Endothelial cell of umbilical vein (primary cell): ENCODE measurements at regions of chr16 and their contacts with region 1.

Region 1: GRCh38 chr16:47141773-47142485 is 1.8 kb downstream of the NETO2 start:
- DNase-seq: peak; percentile 90
- H3K4me3 ChIP-seq: peak overlapping the region; percentile 62 to 83 (median 69)
- H3K27ac ChIP-seq: no peak overlapping the region
- H3K4me1 ChIP-seq: peaks cover 12% of the 10 kb centered on the region
- H3K27me3 ChIP-seq: no peaks in the 10 kb centered on the region
- CTCF ChIP-seq: peak; percentile 94 to 96
- POLR2A ChIP-seq: no peak

Region 2: DNA sequence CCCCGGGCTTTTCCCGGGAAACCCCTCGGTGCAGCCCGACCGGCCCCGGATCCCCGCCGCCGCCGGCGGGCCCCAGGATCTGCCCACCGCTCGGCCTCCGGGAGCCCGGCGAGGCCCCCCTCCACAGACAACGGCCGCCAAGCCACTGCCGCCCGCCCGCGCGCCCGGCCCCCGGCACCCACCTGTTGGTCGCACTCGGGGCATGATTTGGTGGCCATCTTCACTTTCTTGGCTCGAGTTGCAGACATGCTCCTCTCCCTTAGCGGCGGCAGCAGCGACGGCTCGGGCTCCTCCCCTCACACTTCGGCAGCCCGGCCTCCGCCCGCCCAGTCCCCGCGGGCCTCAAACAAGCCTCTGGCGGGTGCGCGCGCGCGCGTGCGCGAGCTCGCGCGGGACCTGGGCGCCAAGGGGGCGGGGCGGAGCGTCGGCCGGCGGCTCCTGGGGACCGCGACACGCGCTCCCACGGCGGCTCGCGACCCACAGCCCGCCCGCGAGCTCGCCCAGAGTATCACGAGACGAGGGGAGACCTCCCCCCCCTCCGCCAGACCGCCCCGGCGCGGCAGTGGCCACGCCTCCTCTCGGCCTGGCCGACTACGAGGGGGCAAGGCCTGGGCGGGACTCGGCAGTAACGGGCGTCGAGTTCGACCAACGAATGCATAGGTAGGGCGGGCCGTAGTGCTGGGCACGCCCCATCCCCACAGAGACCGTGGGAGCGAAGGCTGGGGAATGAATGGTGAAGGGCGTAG is 310.9 kb before region 1 on chr16 and contains the start of gene C16orf87:
- CTCF ChIA-PET with region 1: no interaction called
- POLR2A ChIA-PET with region 1: no interaction called
- dilution Hi-C with region 1: no loop called
- intact Hi-C with region 1: loop called (anchors 5 kb)
- DNase-seq: peak; percentile 93
- H3K4me3 ChIP-seq: peak within 1 kb of the TSS; percentile 74 to 91 (median 82)
- H3K27ac ChIP-seq: peak within 1 kb of the TSS; percentile 50
- H3K4me1 ChIP-seq: peaks cover 24% of the 10 kb centered on the region
- H3K27me3 ChIP-seq: peaks cover 8 to 13% of the 10 kb centered on the region in 2 experiments
- CTCF ChIP-seq: no peak
- POLR2A ChIP-seq: peak; percentile 43
- total RNA-seq, gene C16orf87: 8.5 and 11.1 TPM in 2 replicates

Region 3: GRCh38 chr16:47018223-47018891 is 123.6 kb before region 1 on chr16:
- CTCF ChIA-PET with region 1: interaction called, 18 read pairs
- POLR2A ChIA-PET with region 1: no interaction called
- dilution Hi-C with region 1: no loop called
- intact Hi-C with region 1: no loop called
- DNase-seq: peak; percentile 13
- H3K4me3 ChIP-seq: no peak overlapping the region
- H3K27ac ChIP-seq: no peak overlapping the region
- H3K4me1 ChIP-seq: no peaks in the 10 kb centered on the region
- H3K27me3 ChIP-seq: no peaks in the 10 kb centered on the region
- CTCF ChIP-seq: peak in 1 of 2 donors; percentile 33
- POLR2A ChIP-seq: no peak

Region 4: DNA sequence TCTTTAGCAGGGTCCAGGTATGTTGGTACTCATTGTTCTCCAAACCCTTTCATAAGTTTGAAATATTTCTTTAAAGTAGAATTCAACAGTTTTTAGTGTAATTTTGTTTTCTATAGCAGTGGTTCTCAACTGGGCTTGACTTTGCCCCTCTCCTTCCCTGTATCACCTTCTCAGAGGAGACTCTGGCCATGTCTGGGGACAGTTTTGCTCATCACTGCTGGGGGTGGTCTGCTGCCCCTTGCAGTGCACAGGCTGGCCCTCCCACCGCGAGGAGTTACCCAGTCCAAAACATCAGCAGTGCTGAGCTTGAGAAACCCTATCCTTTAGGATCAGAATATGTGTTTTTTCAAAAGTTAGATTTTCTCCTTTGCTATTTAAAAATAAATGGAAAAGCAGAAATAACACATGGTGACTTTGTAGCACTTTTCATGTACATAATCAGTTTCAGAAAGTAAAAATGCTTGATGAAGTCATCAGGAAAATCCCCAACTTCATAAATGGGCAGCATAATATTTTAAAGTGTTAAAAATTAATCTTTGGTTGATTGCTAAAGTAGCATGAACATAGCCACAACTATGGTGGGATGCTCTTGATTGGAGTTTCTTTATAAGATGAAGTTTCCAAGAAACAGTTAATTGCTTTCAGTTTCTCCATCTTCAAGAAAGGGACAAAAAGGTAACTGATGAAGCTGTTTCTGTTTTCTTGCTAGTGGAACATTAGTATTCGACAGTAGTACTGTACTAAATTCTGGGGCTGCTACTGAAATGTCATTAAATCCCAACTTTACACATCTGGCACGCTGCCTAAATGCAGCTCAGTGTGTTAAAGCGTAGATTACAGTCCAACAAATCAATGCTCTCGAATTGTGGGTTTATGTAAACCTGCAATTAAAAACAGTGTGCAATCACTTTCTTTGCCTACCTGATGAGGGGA is 68.4 kb before region 1 on chr16:
- CTCF ChIA-PET with region 1: interaction called, 23 read pairs
- POLR2A ChIA-PET with region 1: no interaction called
- dilution Hi-C with region 1: no loop called
- intact Hi-C with region 1: no loop called
- DNase-seq: no peak
- H3K4me3 ChIP-seq: no peak overlapping the region
- H3K27ac ChIP-seq: no peak overlapping the region
- H3K4me1 ChIP-seq: no peaks in the 10 kb centered on the region
- H3K27me3 ChIP-seq: peaks cover 1 to 10% of the 10 kb centered on the region in 2 experiments
- CTCF ChIP-seq: no peak
- POLR2A ChIP-seq: no peak

Region 5: DNA sequence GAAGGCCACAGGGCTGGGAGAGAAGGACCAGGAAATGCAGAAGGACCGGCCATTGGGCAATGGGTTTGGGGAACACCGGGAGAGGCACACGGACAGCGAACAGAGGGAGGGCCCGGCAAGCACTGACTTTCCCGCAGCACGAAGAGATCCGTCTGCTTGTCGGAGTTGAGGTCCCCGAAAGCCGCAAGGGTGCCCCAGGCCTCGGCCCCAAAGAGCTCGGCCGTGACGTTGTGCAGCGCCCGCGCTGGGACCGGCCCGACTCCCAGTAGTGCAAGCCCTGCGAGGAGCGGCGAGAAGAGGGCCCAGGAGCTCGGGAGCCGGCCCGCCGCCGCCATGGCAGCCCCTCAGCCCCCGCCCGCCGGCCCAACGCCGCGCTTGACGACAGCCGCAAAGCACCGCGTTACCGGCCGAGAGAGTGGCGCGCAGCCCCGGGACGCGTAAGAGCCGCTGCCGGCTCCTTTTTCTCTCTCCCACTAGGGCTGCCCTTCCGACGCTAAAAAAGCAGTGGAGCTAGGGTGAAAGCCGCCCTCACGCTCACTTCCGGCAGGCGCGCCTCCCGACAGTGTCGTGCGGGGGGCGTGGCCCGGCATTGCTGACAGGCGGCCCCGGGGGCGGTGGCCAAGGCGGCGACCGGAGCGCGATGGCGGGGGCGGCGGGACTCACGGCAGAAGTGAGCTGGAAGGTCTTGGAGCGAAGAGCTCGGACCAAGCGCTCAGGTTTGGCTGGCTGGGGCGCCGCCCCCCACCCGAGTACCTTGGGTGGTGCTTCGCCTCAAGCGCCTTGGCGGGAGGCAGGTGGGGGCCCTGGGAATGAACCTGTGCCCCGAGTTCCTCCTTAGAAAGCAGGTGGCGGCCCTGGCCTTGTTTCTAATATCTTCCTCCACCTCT is 319.0 kb after region 1 on chr16 and contains the starts of genes ITFG1 and PHKB:
- CTCF ChIA-PET with region 1: interaction called, 10 read pairs
- POLR2A ChIA-PET with region 1: interaction called, 3 read pairs
- dilution Hi-C with region 1: no loop called
- intact Hi-C with region 1: loop called (anchors 1 kb)
- DNase-seq: peak; percentile 90
- H3K4me3 ChIP-seq: peak within 1 kb of the TSS; percentile 67 to 99 (median 77)
- H3K27ac ChIP-seq: peak within 1 kb of the TSS; percentile 99
- H3K4me1 ChIP-seq: peaks cover 31% of the 10 kb centered on the region
- H3K27me3 ChIP-seq: no peaks in the 10 kb centered on the region
- CTCF ChIP-seq: no peak
- POLR2A ChIP-seq: peak; percentile 82
- total RNA-seq, gene ITFG1: 38.0 and 44.2 TPM in 2 replicates
- total RNA-seq, gene PHKB: 60.9 and 61.0 TPM in 2 replicates

Region 6: GRCh38 chr16:48117217-48118105 is 975.5 kb after region 1 on chr16:
- CTCF ChIA-PET with region 1: interaction called, 17 read pairs
- POLR2A ChIA-PET with region 1: no interaction called
- dilution Hi-C with region 1: no loop called
- intact Hi-C with region 1: loop called (anchors 1 kb)
- DNase-seq: peak; percentile 37
- H3K4me3 ChIP-seq: no peak overlapping the region
- H3K27ac ChIP-seq: no peak overlapping the region
- H3K4me1 ChIP-seq: no peaks in the 10 kb centered on the region
- H3K27me3 ChIP-seq: no peaks in the 10 kb centered on the region
- CTCF ChIP-seq: peak; percentile 79 to 88
- POLR2A ChIP-seq: no peak